ENCODE measurements at regions of chr2 and their contacts with region 1.

Region 1: DNA sequence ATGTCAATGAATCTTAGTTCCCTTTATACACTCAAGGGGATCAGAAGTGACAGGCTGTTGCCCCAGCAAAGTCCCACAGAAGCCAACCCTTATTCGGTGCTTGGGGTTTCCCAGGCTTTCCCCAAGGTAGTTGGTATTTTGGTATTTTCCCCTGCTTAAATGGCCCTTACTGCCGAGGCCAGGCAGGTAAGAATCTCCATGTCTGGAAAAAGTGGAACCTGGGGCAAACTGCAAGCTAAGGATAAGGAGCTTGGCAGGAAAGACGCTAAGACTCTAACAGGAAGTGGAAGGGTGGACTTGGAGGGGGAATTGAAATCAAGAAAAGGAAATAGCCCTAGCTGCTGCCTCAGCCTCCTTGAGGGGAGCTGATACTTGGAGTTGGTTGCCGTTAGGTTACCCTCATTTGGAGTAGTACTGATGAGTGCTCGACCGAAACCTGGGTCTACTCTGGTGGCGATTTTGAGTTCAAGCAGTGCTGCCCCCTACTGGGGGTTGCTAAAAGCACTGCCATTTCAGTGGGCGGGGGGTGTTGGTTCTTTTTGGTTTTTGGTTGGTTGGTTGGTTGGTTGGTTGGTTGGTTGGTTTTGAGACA is 3.3 kb upstream of the GPBAR1 start:
- DNase-seq: peak; percentile 56
- H3K4me3 Mint-ChIP-seq: no peak overlapping the region
- H3K27ac Mint-ChIP-seq: no peak overlapping the region
- H3K4me1 Mint-ChIP-seq: no peaks in the 10 kb centered on the region
- H3K27me3 Mint-ChIP-seq: no peaks in the 10 kb centered on the region
- CTCF ChIP-seq: peak; percentile 63

Region 2: GRCh38 chr2:218186355-218186766 is 71.1 kb before region 1 on chr2:
- CTCF ChIA-PET with region 1: interaction called, 8 read pairs
- POLR2A ChIA-PET with region 1: no interaction called
- intact Hi-C with region 1: loop called (anchors 1 kb)
- DNase-seq: peak; percentile 82
- H3K4me3 Mint-ChIP-seq: no peak overlapping the region
- H3K27ac Mint-ChIP-seq: no peak overlapping the region
- H3K4me1 Mint-ChIP-seq: peaks cover 6% of the 10 kb centered on the region
- H3K27me3 Mint-ChIP-seq: no peaks in the 10 kb centered on the region
- CTCF ChIP-seq: peak; percentile 84

Region 3: DNA sequence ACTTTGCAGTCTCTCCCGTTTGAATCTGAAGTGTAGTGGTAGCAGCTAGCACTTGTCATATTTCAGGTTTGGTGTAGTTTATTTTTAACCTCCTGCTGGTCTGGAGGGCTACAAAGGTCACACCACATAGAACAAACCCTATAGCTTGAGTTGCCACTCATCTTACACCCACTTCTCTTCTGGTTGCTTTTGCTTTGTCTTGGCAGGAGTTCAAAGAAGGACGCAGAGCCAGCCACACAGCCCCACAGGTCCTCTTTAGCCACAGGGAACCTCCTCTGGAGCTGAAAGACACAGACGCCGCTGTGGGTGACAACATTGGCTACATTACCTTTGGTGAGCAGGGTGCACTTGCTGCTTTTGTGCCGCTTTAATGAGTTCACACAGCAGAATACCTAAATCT is 12.3 kb before region 1 on chr2:
- CTCF ChIA-PET with region 1: interaction called, 8 read pairs
- POLR2A ChIA-PET with region 1: interaction called, 19 read pairs
- intact Hi-C with region 1: no loop called
- DNase-seq: no peak
- H3K4me3 Mint-ChIP-seq: no peak overlapping the region
- H3K27ac Mint-ChIP-seq: peak overlapping the region; percentile 54
- H3K4me1 Mint-ChIP-seq: no peaks in the 10 kb centered on the region
- H3K27me3 Mint-ChIP-seq: no peaks in the 10 kb centered on the region
- CTCF ChIP-seq: no peak